MCF 10A (cell line): ENCODE measurements at regions of chr1 and their contacts with region 1.

Region 1: GRCh38 chr1:28313710-28314546 is 14.9 kb upstream of the MED18 start:
- DNase-seq: peak; percentile 87
- H3K4me3 Mint-ChIP-seq: peak overlapping the region; percentile 16
- H3K27ac Mint-ChIP-seq: peak overlapping the region; percentile 87
- H3K4me1 Mint-ChIP-seq: peaks cover 9% of the 10 kb centered on the region
- H3K27me3 Mint-ChIP-seq: no peaks in the 10 kb centered on the region
- CTCF ChIP-seq: no peak

Region 2: GRCh38 chr1:28282426-28283407 is 31.2 kb before region 1 on chr1:
- CTCF ChIA-PET with region 1: no interaction called
- POLR2A ChIA-PET with region 1: interaction called, 11 read pairs
- intact Hi-C with region 1: no loop called
- DNase-seq: no peak
- H3K4me3 Mint-ChIP-seq: no peak overlapping the region
- H3K27ac Mint-ChIP-seq: no peak overlapping the region
- H3K4me1 Mint-ChIP-seq: no peaks in the 10 kb centered on the region
- H3K27me3 Mint-ChIP-seq: no peaks in the 10 kb centered on the region
- CTCF ChIP-seq: no peak

Region 3: GRCh38 chr1:28296401-28297261 is 17.3 kb before region 1 on chr1:
- CTCF ChIA-PET with region 1: interaction called, 10 read pairs
- POLR2A ChIA-PET with region 1: interaction called, 15 read pairs
- intact Hi-C with region 1: no loop called
- DNase-seq: no peak
- H3K4me3 Mint-ChIP-seq: no peak overlapping the region
- H3K27ac Mint-ChIP-seq: no peak overlapping the region
- H3K4me1 Mint-ChIP-seq: no peaks in the 10 kb centered on the region
- H3K27me3 Mint-ChIP-seq: no peaks in the 10 kb centered on the region
- CTCF ChIP-seq: no peak